Dorsolateral prefrontal cortex (tissue), 120 donors: ENCODE measurements at regions of chr16 and their contacts with region 1.

Region 1: DNA sequence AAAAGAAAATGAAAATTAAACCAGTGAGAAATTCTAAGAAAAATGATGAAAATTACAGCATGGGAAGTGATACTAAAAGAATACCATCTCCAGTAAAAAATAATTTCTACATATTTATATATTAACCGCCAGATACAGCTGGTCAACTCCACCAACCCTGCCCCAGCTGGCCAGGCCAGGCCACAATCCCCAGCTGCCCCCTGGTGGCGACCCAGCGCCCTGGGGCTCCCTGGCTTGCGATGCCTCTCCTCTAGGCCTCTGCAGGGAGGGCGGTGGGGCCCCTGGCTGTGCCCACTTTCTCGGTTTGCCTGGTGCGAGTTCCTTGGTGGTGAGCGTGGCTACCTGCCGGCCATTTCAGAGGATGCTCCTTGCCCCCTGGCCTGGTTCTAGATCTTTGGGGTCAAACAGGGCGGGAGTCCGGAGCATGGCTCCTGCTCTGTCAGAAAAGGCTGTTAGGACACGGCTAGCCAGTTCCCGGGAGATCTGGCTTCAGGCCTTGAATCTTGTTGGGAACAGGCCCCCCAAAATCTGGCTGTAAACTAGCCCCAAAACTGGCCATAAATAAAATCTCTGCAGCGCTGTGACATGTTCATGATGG is 14.5 kb downstream of the GLIS2 start:
- DNase-seq: peak; percentile 71 to 89 (median 75)
- H3K4me3 ChIP-seq: peak overlapping the region in 1 of 59 donors; percentile 15
- H3K27ac ChIP-seq: peak overlapping the region in 2 of 59 donors; percentile 9 to 11
- H3K27me3 ChIP-seq: no peaks in the 10 kb centered on the region
- CTCF ChIP-seq: peak; percentile 81 to 99 (median 97)

Region 2: DNA sequence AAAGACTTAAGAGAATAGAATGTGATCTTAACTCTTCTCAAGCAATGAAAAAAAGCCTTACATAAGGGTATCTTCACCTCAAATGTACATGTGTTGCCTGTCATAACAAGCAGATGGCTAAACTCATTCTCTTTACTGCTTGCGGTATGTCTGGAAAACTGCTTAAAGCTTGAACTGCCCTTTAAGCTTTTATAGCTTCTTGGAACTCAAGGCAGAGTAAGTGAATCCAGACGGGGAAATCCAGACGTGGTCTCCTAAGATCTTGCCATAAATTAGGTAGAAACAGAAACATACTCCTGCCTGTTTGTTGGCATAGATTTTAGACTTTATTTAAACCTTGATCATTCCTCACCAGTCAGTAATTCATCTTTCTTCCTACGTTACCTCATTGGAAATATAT is 810.0 kb before region 1 on chr16:
- intact Hi-C with region 1: loop called in 1 of 2 experiments (anchors 10 kb)
- DNase-seq: no peak
- H3K4me3 ChIP-seq: no peak overlapping the region
- H3K27ac ChIP-seq: peak overlapping the region in 2 of 59 donors; percentile 13 to 20
- H3K27me3 ChIP-seq: no peaks in the 10 kb centered on the region
- CTCF ChIP-seq: no peak

Region 3: GRCh38 chr16:3690470-3690928 is 639.9 kb before region 1 on chr16:
- intact Hi-C with region 1: loop called in 1 of 2 experiments (anchors 10 kb)
- DNase-seq: peak; percentile 88 to 97 (median 94)
- H3K4me3 ChIP-seq: peak overlapping the region; percentile 17 to 74 (median 52)
- H3K27ac ChIP-seq: peak overlapping the region in 55 of 59 donors; percentile 7 to 85 (median 65)
- H3K27me3 ChIP-seq: no peaks in the 10 kb centered on the region
- CTCF ChIP-seq: peak; percentile 87 to 99 (median 96)

Region 4: DNA sequence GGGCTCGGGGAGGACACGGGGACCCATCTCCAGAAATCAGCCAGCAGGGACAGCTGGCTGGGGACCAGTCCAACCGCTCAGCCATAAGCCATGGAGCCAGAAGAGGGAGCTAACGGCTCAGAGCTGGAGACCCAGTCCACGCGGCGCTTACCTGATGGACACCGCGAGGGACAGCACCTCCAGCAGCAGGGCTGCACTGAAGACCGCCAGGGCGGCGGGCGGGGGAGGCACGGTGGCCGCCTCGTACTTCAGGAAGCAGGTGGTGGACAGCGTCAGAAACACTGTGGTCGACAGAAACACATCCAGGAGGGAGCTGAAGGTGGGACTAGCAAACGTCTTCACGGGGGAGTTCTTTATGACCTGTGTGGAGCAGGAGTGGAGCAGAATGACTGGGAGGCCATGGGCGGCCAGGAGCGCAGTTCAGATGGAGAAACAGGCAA is 347.3 kb before region 1 on chr16:
- intact Hi-C with region 1: loop called (anchors 5 kb)
- DNase-seq: peak; percentile 39 to 85 (median 70)
- H3K4me3 ChIP-seq: no peak overlapping the region
- H3K27ac ChIP-seq: no peak overlapping the region
- H3K27me3 ChIP-seq: no peaks in the 10 kb centered on the region
- CTCF ChIP-seq: peak in 54 of 56 donors; percentile 15 to 81 (median 65)

Region 5: DNA sequence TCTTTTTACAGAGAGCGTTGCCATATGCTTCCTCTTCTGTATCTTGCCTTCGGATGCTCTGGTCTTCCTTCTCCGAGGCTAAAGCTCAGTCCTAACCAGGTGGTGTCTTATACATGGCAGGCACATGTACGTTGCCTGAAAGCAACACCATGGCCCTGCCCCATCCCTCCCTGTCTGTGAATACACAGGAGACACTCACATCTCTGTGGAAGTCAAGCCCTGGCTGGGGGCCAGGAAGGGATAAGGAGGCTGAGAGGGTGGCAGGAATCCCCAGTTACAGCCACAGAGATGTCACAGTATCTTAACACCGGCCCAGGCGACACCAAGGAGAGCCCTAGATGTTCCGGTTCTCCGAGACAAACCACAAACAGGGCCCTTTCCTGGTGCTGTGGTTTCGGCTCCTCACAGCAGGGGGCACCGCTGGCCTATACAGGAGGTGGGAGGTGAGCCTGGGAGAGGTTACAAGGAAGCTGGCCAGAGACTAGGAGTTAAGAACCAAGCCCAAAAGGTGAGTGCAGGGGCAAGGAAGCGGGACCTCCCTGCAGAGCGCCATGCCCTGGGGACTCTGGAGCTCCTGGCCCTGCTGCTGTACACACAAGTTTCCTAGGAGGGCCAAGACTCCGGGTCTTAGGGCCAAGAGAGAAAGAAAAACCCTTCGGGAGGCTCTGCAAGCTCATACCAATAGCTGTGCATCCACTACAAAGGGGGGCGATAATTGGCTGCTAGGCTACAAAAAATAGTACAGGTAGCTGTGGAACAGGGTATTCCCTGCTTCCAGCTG is 130.2 kb before region 1 on chr16:
- intact Hi-C with region 1: loop called in 1 of 2 experiments (anchors 2 kb)
- DNase-seq: peak in 6 of 10 donors; percentile 26 to 61 (median 40)
- H3K4me3 ChIP-seq: no peak overlapping the region
- H3K27ac ChIP-seq: no peak overlapping the region
- H3K27me3 ChIP-seq: no peaks in the 10 kb centered on the region
- CTCF ChIP-seq: peak in 51 of 56 donors; percentile 14 to 64 (median 45)

Region 6: GRCh38 chr16:4232541-4233386 is 97.6 kb before region 1 on chr16:
- intact Hi-C with region 1: no loop called
- DNase-seq: no peak
- H3K4me3 ChIP-seq: no peak overlapping the region
- H3K27ac ChIP-seq: peak overlapping the region in 13 of 59 donors; percentile 7 to 71 (median 35)
- H3K27me3 ChIP-seq: no peaks in the 10 kb centered on the region
- CTCF ChIP-seq: no peak

Region 7: DNA sequence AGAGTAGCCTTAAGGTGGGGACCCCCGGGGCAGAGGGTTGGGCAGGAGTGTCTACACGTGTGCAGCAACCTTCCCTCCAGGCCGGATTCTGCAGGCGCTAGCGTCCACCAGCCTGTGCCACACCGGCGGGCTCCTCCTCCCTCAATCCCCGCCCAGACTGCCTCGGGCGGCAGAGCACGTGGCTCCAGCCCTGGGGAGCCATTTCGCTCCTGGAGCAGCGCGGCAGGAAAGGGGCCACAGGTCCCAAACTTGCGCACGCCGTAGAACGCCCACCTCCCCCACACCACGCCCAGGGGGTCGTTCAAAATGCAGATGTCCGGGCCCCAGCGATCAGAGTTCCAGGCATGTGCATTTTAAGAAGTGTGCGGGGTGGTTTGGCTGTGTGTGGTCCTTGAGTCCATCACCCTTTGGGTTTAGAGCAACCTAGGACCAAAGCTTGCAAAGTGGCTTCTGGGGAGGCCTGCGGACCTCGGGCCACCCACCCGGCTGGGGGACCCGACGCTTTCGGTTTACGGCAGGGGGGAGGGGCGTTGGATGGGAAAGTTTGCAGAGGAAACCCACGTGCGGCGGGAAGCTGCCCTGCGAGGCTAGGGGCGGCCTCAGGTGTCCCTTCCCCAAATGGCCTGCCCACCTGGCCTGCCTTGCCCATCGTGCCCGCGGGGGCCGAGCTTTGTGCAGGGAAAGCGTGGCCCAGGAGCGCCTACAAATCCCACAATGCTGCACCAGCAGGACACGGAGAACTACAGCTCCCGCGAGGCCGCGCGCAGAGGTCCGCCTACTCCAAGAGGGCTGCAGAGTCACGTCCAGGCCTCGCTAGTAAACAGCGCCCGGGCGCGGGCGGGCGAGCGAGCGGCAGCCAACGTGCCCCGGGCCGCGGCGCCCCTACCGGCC is 59.0 kb before region 1 on chr16:
- intact Hi-C with region 1: loop called (anchors 5 kb)
- DNase-seq: peak; percentile 94 to 98 (median 97)
- H3K4me3 ChIP-seq: peak overlapping the region; percentile 58 to 97 (median 88)
- H3K27ac ChIP-seq: peak overlapping the region in 58 of 59 donors; percentile 32 to 97 (median 93)
- H3K27me3 ChIP-seq: no peaks in the 10 kb centered on the region
- CTCF ChIP-seq: peak in 30 of 56 donors; percentile 1 to 54 (median 30)

Region 8: DNA sequence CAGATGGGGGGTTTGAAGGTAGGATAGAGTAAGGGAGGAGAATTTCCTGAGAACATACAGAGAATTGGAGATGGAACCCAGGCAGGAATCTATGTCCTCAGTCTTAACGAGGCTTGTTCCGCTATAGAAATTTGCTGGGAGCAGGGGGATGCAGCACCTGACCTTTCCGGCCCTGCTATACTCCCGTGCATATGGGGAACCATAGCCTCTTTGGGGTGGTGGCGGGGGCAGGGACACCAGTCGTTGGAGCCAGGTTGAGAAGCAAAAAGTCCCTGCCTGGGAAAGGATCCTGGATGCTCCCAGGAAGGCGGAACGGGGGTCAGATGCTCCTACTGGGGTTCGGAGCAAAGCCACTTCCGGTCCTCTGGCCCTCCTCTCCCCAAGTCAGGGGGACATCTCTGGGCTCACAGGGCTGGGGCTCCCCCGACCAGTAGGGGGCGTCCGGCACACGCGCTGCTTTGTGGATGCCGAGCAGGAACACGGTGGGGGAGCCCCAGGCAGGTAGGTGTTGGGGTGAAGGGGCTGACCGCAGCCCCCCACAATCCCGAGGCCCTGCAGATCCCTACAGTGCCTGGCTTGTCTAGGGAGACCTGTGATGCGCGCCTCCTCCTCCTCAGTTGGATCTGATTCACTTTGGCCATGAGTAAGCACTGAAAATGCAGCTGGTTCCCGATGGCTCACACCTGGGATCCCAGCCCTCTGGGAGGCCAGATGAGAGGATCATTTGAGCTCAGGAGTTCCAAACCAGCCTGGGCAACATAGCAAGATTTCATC is 42.0 kb before region 1 on chr16:
- intact Hi-C with region 1: loop called (anchors 1 to 2 kb)
- DNase-seq: peak; percentile 67 to 86 (median 74)
- H3K4me3 ChIP-seq: peak overlapping the region in 24 of 59 donors; percentile 0 to 44 (median 20)
- H3K27ac ChIP-seq: no peak overlapping the region
- H3K27me3 ChIP-seq: no peaks in the 10 kb centered on the region
- CTCF ChIP-seq: peak; percentile 73 to 98 (median 93)